CD4-positive, alpha-beta memory T cell (primary cell): ENCODE measurements at regions of chr1 and their contacts with region 1.

Region 1: GRCh38 chr1:172699111-172699510 is 40.2 kb downstream of the FASLG start:
- DNase-seq: peak; percentile 72 to 92 (median 77)
- H3K4me3 ChIP-seq: peak overlapping the region; percentile 17 to 38
- H3K4me3 Mint-ChIP-seq: peak overlapping the region; percentile 67 to 85 (median 76)
- H3K27ac ChIP-seq: peak overlapping the region; percentile 64
- H3K27ac Mint-ChIP-seq: peak overlapping the region in 6 of 7 donors; percentile 92 to 96 (median 94)
- H3K4me1 ChIP-seq: peaks cover 85% of the 10 kb centered on the region
- H3K4me1 Mint-ChIP-seq: peaks cover 0 to 54% (median 30%) of the 10 kb centered on the region in 4 donors
- H3K27me3 ChIP-seq: no peaks in the 10 kb centered on the region
- H3K27me3 Mint-ChIP-seq: no peaks in the 10 kb centered on the region

Region 2: DNA sequence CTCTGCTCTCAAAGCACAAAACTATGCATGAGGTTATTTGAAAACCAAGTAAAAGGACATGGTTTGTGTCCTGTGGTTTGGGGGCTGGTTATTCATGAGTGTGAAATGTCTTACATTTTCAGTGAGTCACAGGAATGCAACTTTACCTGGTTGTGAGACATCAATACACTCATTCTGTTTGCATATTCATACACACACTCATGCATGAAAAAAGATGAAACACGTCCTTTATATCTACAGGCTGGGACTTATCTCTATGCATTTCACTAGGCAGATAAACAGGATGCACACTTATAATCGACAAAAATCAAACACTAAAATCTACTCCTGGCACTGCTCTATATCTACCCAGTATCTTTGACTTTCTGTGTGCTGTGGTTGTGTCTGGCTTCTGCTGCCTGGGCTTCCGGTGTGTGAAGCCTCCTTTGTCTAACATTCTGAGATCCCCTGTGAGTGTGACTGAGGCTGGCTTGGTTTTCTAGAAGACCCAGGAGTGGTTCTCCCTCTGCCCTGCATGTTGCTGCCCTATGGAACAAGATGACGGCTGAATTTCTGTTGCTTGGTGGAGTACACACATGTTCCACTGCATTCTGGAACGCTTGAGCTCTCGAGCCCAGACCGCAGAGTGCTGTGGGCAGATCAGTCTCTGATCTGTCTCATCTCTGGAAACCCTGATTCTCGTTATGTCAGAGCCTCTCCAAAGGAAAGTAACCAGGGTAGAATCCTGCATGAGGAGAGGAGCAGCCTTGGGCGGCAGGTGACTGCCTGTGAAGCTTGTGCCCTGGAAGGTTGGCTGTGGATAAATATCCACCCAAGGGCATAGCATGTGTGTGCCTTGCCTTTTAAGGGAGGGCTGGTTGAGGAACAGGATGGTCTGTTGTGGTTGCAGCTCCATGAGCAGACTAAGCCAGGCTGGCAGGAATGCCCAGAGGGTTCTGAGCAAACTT is 60.0 kb before region 1 on chr1:
- CTCF ChIA-PET with region 1: interaction called, 4 read pairs
- POLR2A ChIA-PET with region 1: interaction called, 12 read pairs
- intact Hi-C with region 1: loop called (anchors 1 kb)
- DNase-seq: peak; percentile 73 to 89 (median 77)
- H3K4me3 ChIP-seq: peak overlapping the region; percentile 25 to 27
- H3K4me3 Mint-ChIP-seq: peak overlapping the region; percentile 73 to 86 (median 80)
- H3K27ac ChIP-seq: peak overlapping the region; percentile 38
- H3K27ac Mint-ChIP-seq: peak overlapping the region; percentile 82 to 94 (median 90)
- H3K4me1 ChIP-seq: peaks cover 74% of the 10 kb centered on the region
- H3K4me1 Mint-ChIP-seq: peaks cover 62 to 77% (median 72%) of the 10 kb centered on the region in 4 donors
- H3K27me3 ChIP-seq: no peaks in the 10 kb centered on the region
- H3K27me3 Mint-ChIP-seq: no peaks in the 10 kb centered on the region

Region 3: DNA sequence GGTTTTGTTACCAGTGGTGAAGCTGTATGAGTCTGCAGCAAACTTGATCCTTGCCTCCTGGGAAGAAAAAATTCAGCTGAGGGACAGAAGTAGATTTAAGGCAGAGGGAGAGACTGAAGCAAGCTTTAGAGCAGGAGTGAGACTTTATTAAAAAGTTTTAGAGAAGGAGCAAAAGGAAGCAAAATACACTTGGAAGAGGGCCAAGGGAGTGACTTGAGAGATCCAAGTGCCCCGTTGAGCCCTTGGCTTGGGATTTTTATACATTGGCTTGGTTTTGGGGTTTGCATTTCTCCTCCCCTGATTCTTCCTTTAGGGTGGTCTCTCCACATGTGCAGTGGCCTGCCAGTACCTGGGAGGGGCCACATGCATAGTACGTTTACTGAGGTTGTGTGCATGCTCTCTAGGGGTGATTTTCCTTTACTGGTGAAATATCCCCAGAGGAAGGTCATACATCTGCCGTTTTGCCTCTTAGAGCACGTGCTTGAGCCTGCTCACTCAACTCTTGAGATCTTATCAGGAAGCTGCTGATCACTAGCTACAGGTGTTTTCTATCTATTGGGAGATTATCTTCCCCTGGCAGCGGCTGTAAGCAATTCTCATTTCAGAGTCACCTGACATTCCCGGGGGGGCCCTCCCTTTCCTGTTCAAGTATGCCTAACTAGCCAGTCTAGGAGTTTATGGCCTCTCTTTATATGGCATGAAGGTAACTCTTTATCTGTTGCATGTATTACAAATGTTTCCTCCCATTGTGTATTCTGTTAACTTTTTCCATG is 19.9 kb before region 1 on chr1:
- CTCF ChIA-PET with region 1: no interaction called
- POLR2A ChIA-PET with region 1: interaction called, 8 read pairs
- intact Hi-C with region 1: loop called (anchors 2 kb)
- DNase-seq: peak in 1 of 5 donors; percentile 50
- H3K4me3 ChIP-seq: no peak overlapping the region
- H3K4me3 Mint-ChIP-seq: peak overlapping the region in 3 of 8 donors; percentile 36 to 73 (median 39)
- H3K27ac ChIP-seq: no peak overlapping the region
- H3K27ac Mint-ChIP-seq: peak overlapping the region in 5 of 7 donors; percentile 35 to 75 (median 53)
- H3K4me1 ChIP-seq: peaks cover 38% of the 10 kb centered on the region
- H3K4me1 Mint-ChIP-seq: peaks cover 37 to 87% (median 63%) of the 10 kb centered on the region in 4 donors
- H3K27me3 ChIP-seq: no peaks in the 10 kb centered on the region
- H3K27me3 Mint-ChIP-seq: no peaks in the 10 kb centered on the region

Region 4: DNA sequence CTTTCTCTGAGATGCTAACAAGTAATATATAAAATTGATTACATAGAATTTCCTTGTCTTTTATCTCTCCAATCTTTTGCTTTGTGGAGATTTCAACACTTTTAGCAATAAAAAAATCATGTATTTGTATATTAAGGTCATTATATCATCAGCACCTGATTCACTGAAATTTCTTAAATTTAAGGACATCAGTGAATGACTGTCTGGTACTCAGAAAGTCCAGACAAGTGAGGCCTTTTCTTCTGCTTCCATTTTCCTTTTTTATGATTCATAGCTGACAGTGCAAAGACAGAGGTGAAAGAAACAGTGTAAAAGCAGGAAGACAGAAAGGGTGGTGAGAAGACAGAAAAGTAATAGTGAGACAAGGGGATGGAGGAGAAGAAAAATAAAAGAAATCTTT is 14.4 kb after region 1 on chr1:
- CTCF ChIA-PET with region 1: interaction called, 16 read pairs
- POLR2A ChIA-PET with region 1: interaction called, 13 read pairs
- intact Hi-C with region 1: loop called (anchors 2 kb)
- DNase-seq: no peak
- H3K4me3 ChIP-seq: no peak overlapping the region
- H3K4me3 Mint-ChIP-seq: no peak overlapping the region
- H3K27ac ChIP-seq: no peak overlapping the region
- H3K27ac Mint-ChIP-seq: no peak overlapping the region
- H3K4me1 ChIP-seq: peaks cover 19% of the 10 kb centered on the region
- H3K4me1 Mint-ChIP-seq: peaks cover 26 to 31% (median 28%) of the 10 kb centered on the region in 4 donors
- H3K27me3 ChIP-seq: no peaks in the 10 kb centered on the region
- H3K27me3 Mint-ChIP-seq: no peaks in the 10 kb centered on the region

Region 5: GRCh38 chr1:172778456-172779455 is 79.6 kb after region 1 on chr1:
- CTCF ChIA-PET with region 1: no interaction called
- POLR2A ChIA-PET with region 1: no interaction called
- intact Hi-C with region 1: no loop called
- DNase-seq: peak in 4 of 5 donors; percentile 19 to 37 (median 28)
- H3K4me3 ChIP-seq: no peak overlapping the region
- H3K4me3 Mint-ChIP-seq: peak overlapping the region; percentile 42 to 83 (median 62)
- H3K27ac ChIP-seq: no peak overlapping the region
- H3K27ac Mint-ChIP-seq: peak overlapping the region in 4 of 7 donors; percentile 27 to 54 (median 40)
- H3K4me1 ChIP-seq: peaks cover 11% of the 10 kb centered on the region
- H3K4me1 Mint-ChIP-seq: peaks cover 7 to 18% (median 14%) of the 10 kb centered on the region in 4 donors
- H3K27me3 ChIP-seq: no peaks in the 10 kb centered on the region
- H3K27me3 Mint-ChIP-seq: no peaks in the 10 kb centered on the region

Region 6: DNA sequence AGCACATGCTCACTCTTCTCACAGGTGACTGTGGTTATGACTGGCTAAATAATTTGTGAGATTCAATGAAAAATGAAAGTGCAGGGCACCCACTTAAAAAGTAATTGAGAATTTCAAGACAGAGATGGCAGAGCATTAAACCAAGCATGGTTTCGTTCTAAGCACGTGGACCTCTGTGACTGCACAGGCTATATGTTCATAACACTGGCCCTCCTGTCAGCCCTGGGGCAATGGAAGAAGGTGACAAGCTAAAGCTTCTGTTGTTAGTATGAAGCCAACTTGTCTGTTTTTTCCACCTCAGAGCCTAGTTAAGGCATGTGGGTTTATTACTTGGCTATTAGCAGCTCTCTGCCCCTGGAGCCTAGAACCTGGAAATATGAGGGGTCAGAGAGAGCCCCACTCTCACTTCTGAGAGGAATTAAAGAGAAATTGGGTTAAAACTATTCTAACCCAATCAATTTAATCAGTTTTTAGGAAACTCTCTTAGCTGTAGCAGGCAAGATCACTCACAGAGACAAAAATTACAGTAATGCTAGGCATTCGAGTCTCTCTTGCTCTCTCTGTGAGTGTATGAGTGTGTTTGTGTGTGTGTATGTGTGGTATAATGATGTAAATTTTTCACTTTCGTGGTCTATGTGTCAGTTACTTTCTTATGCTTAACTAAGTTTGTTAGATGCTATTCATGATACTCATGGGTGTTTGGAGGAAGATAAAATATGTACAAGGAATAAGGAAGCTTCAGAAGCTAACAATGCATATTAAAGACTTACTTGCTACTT is 90.9 kb after region 1 on chr1:
- CTCF ChIA-PET with region 1: no interaction called
- POLR2A ChIA-PET with region 1: no interaction called
- intact Hi-C with region 1: no loop called
- DNase-seq: no peak
- H3K4me3 ChIP-seq: no peak overlapping the region
- H3K4me3 Mint-ChIP-seq: no peak overlapping the region
- H3K27ac ChIP-seq: no peak overlapping the region
- H3K27ac Mint-ChIP-seq: no peak overlapping the region
- H3K4me1 ChIP-seq: no peaks in the 10 kb centered on the region
- H3K4me1 Mint-ChIP-seq: no peaks in the 10 kb centered on the region
- H3K27me3 ChIP-seq: no peaks in the 10 kb centered on the region
- H3K27me3 Mint-ChIP-seq: no peaks in the 10 kb centered on the region